Transverse colon (tissue), 4 donors: ENCODE measurements at regions of chr10 and their contacts with region 1.

Region 1: DNA sequence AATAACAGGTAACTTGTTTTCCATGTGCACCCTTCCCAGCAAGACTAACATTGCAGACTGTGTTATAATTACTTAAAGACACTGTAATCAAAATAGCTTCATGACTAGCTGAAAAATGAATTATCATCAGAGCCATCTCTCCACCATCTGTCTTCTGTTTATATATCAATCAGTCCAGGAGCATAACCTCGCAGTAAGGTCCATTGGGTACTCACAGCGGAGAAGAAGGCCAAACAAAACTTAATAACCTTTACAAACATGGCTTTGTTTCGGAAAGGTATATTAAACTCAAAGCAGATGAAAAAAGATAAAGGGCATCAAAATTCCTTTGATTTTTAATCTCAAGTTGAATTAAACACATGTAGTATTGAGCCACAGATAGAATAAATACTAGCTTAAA is 90.6 kb downstream of the ODAD2 start:
- DNase-seq: no peak
- H3K4me3 ChIP-seq: no peak overlapping the region
- H3K27ac ChIP-seq: no peak overlapping the region
- H3K4me1 ChIP-seq: no peaks in the 10 kb centered on the region
- H3K27me3 ChIP-seq: no peaks in the 10 kb centered on the region
- CTCF ChIP-seq: no peak
- EP300 ChIP-seq: no peak
- POLR2A ChIP-seq: no peak

Region 2: GRCh38 chr10:27998254-27999004 is 90.1 kb after region 1 on chr10:
- in situ Hi-C with region 1: no loop called
- intact Hi-C with region 1: no loop called
- DNase-seq: peak; percentile 8
- H3K4me3 ChIP-seq: peak overlapping the region; percentile 46 to 72 (median 58)
- H3K27ac ChIP-seq: peak overlapping the region; percentile 22 to 69 (median 52)
- H3K4me1 ChIP-seq: peaks cover 0 to 10% (median 7%) of the 10 kb centered on the region in 4 donors
- H3K27me3 ChIP-seq: peaks cover 43% of the 10 kb centered on the region
- CTCF ChIP-seq: no peak
- EP300 ChIP-seq: no peak
- POLR2A ChIP-seq: no peak

Region 3: GRCh38 chr10:28302638-28303488 is 394.6 kb after region 1 on chr10 and contains the start of gene MPP7:
- in situ Hi-C with region 1: no loop called
- intact Hi-C with region 1: no loop called
- DNase-seq: peak; percentile 95
- H3K4me3 ChIP-seq: peak within 1 kb of the TSS; percentile 63 to 98 (median 84)
- H3K27ac ChIP-seq: peak within 1 kb of the TSS; percentile 92 to 97 (median 96)
- H3K4me1 ChIP-seq: peaks cover 0 to 23% (median 15%) of the 10 kb centered on the region in 4 donors
- H3K27me3 ChIP-seq: peaks cover 3% of the 10 kb centered on the region
- CTCF ChIP-seq: peak; percentile 42 to 63 (median 55)
- EP300 ChIP-seq: no peak
- POLR2A ChIP-seq: peak; percentile 85
- total RNA-seq, gene MPP7: 13.1 to 44.8 (median 27.3) TPM

Region 4: DNA sequence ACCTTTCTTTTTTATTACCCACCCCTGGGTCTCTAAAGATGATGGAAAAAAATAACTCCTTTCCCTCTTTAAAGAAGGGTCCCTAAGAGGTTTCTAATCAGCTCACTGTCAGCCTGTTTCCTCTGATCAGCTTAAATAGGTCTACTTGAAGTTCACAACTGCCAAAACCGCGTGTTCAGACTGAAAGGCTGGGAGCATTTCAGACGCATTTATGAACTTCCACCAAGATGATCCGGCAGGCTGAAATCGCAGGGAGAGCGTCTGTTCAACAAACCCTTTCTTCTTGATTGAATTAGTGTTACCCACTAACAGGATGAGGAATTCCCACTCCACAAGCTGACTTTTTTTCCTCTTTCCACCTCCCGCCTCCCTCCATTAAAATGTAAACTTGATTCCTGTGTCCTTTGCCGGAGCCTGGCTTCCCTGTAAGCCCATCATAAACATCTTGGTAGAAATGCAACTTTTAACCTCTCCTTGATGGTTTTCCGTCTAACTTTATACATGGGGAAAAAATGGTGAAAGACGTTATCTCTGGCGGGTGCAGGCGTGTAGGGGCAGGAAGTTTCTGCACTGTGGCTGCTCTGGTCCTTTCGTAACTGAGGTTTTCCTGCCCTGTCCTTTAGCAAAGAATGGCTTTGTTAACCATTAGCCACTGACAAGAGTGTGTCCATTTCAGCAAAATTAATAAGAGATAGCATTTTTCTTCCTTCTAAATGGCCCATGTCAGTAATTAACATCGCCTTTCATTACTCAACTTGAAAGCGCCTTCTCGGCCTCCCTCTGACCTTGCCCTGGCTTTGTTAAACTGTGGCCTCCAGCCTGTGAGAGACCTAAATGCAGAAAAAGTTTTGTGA is 899.7 kb after region 1 on chr10:
- in situ Hi-C with region 1: no loop called
- intact Hi-C with region 1: loop called (anchors 5 kb)
- DNase-seq: no peak
- H3K4me3 ChIP-seq: no peak overlapping the region
- H3K27ac ChIP-seq: peak overlapping the region; percentile 53 to 67 (median 65)
- H3K4me1 ChIP-seq: peaks cover 0 to 15% (median 4%) of the 10 kb centered on the region in 4 donors
- H3K27me3 ChIP-seq: no peaks in the 10 kb centered on the region
- CTCF ChIP-seq: no peak
- EP300 ChIP-seq: no peak
- POLR2A ChIP-seq: no peak